ENCODE measurements at regions of chr5 and their contacts with region 1.

Region 1: GRCh38 chr5:157180374-157181264 is at the start of gene ITK:
- DNase-seq: peak; percentile 58
- H3K4me3 Mint-ChIP-seq: peak within 1 kb of the TSS; percentile 99
- H3K27ac Mint-ChIP-seq: peak within 1 kb of the TSS; percentile 100
- H3K4me1 Mint-ChIP-seq: peaks cover 45% of the 10 kb centered on the region
- H3K27me3 Mint-ChIP-seq: no peaks in the 10 kb centered on the region
- total RNA-seq, gene ITK: 236 to 240 TPM

Region 2: GRCh38 chr5:157167214-157167621 is 13.4 kb before region 1 on chr5:
- CTCF ChIA-PET with region 1: interaction called, 13 read pairs
- POLR2A ChIA-PET with region 1: interaction called, 82 read pairs
- intact Hi-C with region 1: loop called (anchors 1 kb)
- DNase-seq: peak; percentile 42
- H3K4me3 Mint-ChIP-seq: peak overlapping the region; percentile 47
- H3K27ac Mint-ChIP-seq: peak overlapping the region; percentile 91
- H3K4me1 Mint-ChIP-seq: peaks cover 88% of the 10 kb centered on the region
- H3K27me3 Mint-ChIP-seq: no peaks in the 10 kb centered on the region